ENCODE measurements at regions of chr21 and their contacts with region 1.

Region 1: DNA sequence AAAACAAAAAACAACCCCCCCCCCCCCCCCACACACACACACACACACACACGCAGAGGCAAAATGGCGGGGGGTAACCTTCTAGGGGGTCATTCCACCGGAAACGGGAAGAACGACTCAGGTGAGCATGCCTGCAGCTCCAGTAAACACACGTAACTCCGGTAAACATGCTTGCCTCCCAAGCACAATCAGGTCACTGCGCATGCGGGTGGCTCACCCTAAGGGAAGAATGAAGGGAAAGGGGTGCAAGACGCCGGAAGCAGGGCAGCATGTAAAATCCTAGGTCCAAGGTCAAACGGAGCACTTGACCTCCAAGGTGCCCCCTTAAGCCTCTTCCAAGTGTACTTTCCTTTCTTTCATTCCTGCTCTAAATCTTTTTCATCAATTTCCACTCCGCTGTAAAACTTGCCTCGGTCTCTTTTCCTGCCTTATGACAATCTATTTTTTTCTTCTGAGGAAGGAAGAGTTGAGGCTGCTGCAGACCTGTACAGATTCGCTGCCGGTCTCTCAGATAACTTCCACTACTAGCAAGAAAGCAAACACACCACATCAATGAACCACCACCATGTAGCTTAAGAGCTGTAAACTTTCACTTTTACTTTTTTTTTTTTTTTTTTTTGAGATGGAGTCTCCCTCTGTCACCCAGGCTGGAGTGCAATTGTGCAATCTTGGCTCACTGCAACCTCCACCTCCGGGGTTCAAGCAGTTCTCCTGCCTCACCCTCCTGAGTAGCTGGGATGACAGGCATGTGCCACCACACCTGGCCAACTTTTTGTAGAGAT is 21.0 kb upstream of the CBR3 start:
- DNase-seq: peak in 12 of 14 experiments; percentile 18 to 92 (median 48)
- ATAC-seq: peak; percentile 81
- H3K4me3 ChIP-seq: peak overlapping the region; percentile 56
- H3K4me3 Mint-ChIP-seq: peak overlapping the region; percentile 84
- H3K27ac ChIP-seq: peak overlapping the region; percentile 58 to 79
- H3K27ac Mint-ChIP-seq: peak overlapping the region; percentile 61
- H3K4me1 ChIP-seq: peaks cover 32% of the 10 kb centered on the region
- H3K4me1 Mint-ChIP-seq: peaks cover 27% of the 10 kb centered on the region
- H3K27me3 ChIP-seq: no peaks in the 10 kb centered on the region
- H3K27me3 Mint-ChIP-seq: no peaks in the 10 kb centered on the region
- CTCF ChIP-seq: no peak

Region 2: GRCh38 chr21:36125512-36126222 is 11.8 kb after region 1 on chr21:
- CTCF ChIA-PET with region 1: interaction called, 16 read pairs
- POLR2A ChIA-PET with region 1: interaction called, 3 read pairs
- intact Hi-C with region 1: no loop called
- DNase-seq: peak; percentile 28 to 80 (median 46)
- ATAC-seq: peak; percentile 65
- H3K4me3 ChIP-seq: no peak overlapping the region
- H3K4me3 Mint-ChIP-seq: peak overlapping the region; percentile 10
- H3K27ac ChIP-seq: no peak overlapping the region
- H3K27ac Mint-ChIP-seq: no peak overlapping the region
- H3K4me1 ChIP-seq: peaks cover 7% of the 10 kb centered on the region
- H3K4me1 Mint-ChIP-seq: peaks cover 29% of the 10 kb centered on the region
- H3K27me3 ChIP-seq: no peaks in the 10 kb centered on the region
- H3K27me3 Mint-ChIP-seq: no peaks in the 10 kb centered on the region
- CTCF ChIP-seq: peak; percentile 95

Measured in CD4-positive, alpha-beta T cell (primary cell).